WTC11 (cell line): ENCODE measurements at regions of chr20 and their contacts with region 1.

Region 1: DNA sequence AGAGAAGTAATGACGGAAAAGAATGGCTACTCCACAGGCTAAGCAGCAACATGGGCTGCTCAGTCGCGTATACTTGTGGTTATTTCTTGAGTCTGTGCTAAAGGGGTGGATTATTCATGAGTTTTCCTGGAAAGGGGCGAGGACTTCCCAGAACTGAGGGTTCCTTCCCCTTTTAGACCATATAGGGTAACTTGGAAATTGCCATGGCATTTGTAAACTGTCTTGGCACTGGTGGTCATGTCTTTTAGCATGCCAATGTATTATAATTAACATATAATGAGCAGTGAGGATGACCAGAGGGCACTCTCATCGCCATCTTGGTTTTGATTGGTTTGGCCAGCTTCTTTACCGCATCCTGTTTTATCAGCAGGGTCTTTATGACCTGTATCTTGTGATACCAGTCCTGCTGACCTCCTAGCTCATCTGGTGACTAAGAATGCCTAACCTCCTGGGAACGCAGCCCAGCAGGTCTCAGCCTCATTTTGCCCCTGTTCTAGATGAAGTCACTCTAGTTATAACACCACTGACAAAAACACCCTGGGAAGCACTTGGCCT is 11.4 kb downstream of the LBP start:
- DNase-seq: no peak
- ATAC-seq: no peak
- H3K4me3 Mint-ChIP-seq: no peak overlapping the region
- H3K27ac Mint-ChIP-seq: no peak overlapping the region
- H3K4me1 Mint-ChIP-seq: peaks cover 31% of the 10 kb centered on the region
- H3K27me3 Mint-ChIP-seq: no peaks in the 10 kb centered on the region
- CTCF ChIP-seq: no peak

Region 2: DNA sequence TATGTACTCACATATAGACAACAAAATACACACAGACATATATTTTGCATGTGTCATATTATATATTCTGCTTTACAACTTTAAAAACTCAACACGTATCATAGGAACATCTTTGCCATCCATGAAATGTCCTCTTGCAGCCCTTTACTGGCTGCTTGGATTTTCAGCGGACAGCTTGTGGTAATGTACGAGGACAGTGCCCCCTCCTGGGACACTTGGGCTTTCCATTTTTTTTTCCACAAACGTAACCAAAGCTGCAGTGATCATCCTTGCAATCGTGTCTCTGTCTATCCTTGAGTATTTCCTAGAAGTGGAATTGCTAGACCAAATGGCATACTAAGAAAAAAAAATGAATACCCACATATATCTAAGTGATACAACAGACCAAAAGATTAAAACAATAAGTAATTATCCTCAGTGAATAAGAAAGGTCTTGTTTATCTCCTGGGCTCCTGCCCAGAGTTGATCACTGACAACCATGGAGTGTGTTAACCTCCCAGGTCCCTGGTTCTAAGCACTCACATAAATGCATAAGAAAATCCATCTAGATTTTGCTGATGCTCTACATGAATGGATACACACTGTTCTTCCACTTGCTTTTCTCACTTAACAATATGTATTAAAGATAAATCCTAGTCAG is 35.7 kb before region 1 on chr20:
- CTCF ChIA-PET with region 1: interaction called, 7 read pairs
- POLR2A ChIA-PET with region 1: interaction called, 10 read pairs
- DNase-seq: peak; percentile 35
- ATAC-seq: peak; percentile 62
- H3K4me3 Mint-ChIP-seq: no peak overlapping the region
- H3K27ac Mint-ChIP-seq: no peak overlapping the region
- H3K4me1 Mint-ChIP-seq: no peaks in the 10 kb centered on the region
- H3K27me3 Mint-ChIP-seq: peaks cover 2% of the 10 kb centered on the region; the same call in 1 of the 2 replicates
- CTCF ChIP-seq: peak; percentile 45

Region 3: DNA sequence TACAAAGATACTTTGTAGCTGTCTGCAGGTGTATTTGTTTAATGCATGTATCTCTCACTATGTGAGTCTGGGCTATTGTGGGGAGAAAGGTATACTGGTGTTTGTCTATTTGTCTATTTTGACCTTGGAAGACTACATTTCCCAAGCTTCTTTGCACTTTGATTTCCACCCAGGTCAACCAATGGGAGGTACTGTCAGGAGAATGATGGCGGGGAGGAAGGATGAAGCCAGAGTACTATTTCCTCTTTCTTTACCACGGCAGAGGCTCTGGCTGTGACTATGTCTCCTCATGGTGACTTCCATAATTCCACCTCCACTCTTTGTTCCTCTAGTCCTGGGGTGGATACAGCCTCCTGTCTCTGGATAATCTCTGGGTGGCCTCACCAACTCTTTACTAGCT is 11.7 kb after region 1 on chr20:
- CTCF ChIA-PET with region 1: interaction called, 12 read pairs
- POLR2A ChIA-PET with region 1: interaction called, 4 read pairs
- DNase-seq: no peak
- ATAC-seq: peak; percentile 96
- H3K4me3 Mint-ChIP-seq: peak overlapping the region; percentile 16; the same call in 1 of the 2 replicates
- H3K27ac Mint-ChIP-seq: peak overlapping the region; percentile 64; the same call in 1 of the 2 replicates
- H3K4me1 Mint-ChIP-seq: peaks cover 3% of the 10 kb centered on the region; the same call in 1 of the 2 replicates
- H3K27me3 Mint-ChIP-seq: no peaks in the 10 kb centered on the region
- CTCF ChIP-seq: no peak

Region 4: GRCh38 chr20:38412877-38413577 is 55.3 kb after region 1 on chr20:
- CTCF ChIA-PET with region 1: interaction called, 62 read pairs
- POLR2A ChIA-PET with region 1: no interaction called
- DNase-seq: peak; percentile 4
- ATAC-seq: no peak
- H3K4me3 Mint-ChIP-seq: no peak overlapping the region
- H3K27ac Mint-ChIP-seq: no peak overlapping the region
- H3K4me1 Mint-ChIP-seq: peaks cover 20% of the 10 kb centered on the region
- H3K27me3 Mint-ChIP-seq: no peaks in the 10 kb centered on the region
- CTCF ChIP-seq: no peak